ENCODE measurements at regions of chr16 and their contacts with region 1.

Region 1: GRCh38 chr16:4328046-4328503 is 12.2 kb downstream of the GLIS2 start:
- DNase-seq: peak; percentile 96
- H3K4me3 ChIP-seq: peak overlapping the region; percentile 48 to 56 (median 50)
- H3K27ac ChIP-seq: peak overlapping the region; percentile 79 to 90 (median 88)
- H3K4me1 ChIP-seq: peaks cover 62 to 88% (median 83%) of the 10 kb centered on the region in 4 donors
- H3K27me3 ChIP-seq: no peaks in the 10 kb centered on the region
- CTCF ChIP-seq: peak; percentile 55 to 72 (median 64)
- EP300 ChIP-seq: no peak
- POLR2A ChIP-seq: no peak

Region 2: DNA sequence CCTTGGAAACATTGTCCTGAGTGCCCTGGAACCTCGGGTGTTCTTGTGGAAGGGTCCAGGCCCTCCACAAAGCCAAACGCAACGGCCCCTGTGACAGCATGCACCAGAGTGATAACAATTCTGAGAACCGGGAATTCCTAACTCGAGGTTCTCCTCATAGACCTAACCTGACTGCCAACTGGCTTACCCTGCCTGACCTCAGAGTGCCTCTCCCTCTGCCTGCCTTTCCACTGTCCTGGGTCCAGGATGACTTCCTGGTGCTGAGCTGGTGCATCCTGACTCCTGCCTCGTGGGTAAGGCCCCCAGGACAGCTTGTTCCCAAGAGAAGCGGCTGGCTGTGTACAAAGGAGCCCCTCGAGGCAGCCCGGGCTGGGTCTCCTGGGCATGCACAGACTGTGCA is 138.0 kb before region 1 on chr16:
- intact Hi-C with region 1: no loop called
- DNase-seq: no peak
- H3K4me3 ChIP-seq: no peak overlapping the region
- H3K27ac ChIP-seq: no peak overlapping the region
- H3K4me1 ChIP-seq: no peaks in the 10 kb centered on the region
- H3K27me3 ChIP-seq: peaks cover 0 to 8% (median 0%) of the 10 kb centered on the region in 4 donors
- CTCF ChIP-seq: no peak
- EP300 ChIP-seq: no peak
- POLR2A ChIP-seq: no peak

Region 3: DNA sequence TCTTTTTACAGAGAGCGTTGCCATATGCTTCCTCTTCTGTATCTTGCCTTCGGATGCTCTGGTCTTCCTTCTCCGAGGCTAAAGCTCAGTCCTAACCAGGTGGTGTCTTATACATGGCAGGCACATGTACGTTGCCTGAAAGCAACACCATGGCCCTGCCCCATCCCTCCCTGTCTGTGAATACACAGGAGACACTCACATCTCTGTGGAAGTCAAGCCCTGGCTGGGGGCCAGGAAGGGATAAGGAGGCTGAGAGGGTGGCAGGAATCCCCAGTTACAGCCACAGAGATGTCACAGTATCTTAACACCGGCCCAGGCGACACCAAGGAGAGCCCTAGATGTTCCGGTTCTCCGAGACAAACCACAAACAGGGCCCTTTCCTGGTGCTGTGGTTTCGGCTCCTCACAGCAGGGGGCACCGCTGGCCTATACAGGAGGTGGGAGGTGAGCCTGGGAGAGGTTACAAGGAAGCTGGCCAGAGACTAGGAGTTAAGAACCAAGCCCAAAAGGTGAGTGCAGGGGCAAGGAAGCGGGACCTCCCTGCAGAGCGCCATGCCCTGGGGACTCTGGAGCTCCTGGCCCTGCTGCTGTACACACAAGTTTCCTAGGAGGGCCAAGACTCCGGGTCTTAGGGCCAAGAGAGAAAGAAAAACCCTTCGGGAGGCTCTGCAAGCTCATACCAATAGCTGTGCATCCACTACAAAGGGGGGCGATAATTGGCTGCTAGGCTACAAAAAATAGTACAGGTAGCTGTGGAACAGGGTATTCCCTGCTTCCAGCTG is 127.9 kb before region 1 on chr16:
- intact Hi-C with region 1: loop called (anchors 5 kb)
- DNase-seq: peak; percentile 94
- H3K4me3 ChIP-seq: no peak overlapping the region
- H3K27ac ChIP-seq: no peak overlapping the region
- H3K4me1 ChIP-seq: peaks cover 4 to 10% (median 9%) of the 10 kb centered on the region in 4 donors
- H3K27me3 ChIP-seq: no peaks in the 10 kb centered on the region
- CTCF ChIP-seq: peak; percentile 72 to 86 (median 83)
- EP300 ChIP-seq: no peak
- POLR2A ChIP-seq: no peak

Region 4: DNA sequence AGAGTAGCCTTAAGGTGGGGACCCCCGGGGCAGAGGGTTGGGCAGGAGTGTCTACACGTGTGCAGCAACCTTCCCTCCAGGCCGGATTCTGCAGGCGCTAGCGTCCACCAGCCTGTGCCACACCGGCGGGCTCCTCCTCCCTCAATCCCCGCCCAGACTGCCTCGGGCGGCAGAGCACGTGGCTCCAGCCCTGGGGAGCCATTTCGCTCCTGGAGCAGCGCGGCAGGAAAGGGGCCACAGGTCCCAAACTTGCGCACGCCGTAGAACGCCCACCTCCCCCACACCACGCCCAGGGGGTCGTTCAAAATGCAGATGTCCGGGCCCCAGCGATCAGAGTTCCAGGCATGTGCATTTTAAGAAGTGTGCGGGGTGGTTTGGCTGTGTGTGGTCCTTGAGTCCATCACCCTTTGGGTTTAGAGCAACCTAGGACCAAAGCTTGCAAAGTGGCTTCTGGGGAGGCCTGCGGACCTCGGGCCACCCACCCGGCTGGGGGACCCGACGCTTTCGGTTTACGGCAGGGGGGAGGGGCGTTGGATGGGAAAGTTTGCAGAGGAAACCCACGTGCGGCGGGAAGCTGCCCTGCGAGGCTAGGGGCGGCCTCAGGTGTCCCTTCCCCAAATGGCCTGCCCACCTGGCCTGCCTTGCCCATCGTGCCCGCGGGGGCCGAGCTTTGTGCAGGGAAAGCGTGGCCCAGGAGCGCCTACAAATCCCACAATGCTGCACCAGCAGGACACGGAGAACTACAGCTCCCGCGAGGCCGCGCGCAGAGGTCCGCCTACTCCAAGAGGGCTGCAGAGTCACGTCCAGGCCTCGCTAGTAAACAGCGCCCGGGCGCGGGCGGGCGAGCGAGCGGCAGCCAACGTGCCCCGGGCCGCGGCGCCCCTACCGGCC is 56.7 kb before region 1 on chr16:
- intact Hi-C with region 1: loop called (anchors 5 kb)
- DNase-seq: peak; percentile 97
- H3K4me3 ChIP-seq: peak overlapping the region; percentile 88 to 97 (median 92)
- H3K27ac ChIP-seq: peak overlapping the region; percentile 87 to 91 (median 88)
- H3K4me1 ChIP-seq: peaks cover 12 to 32% (median 29%) of the 10 kb centered on the region in 4 donors
- H3K27me3 ChIP-seq: no peaks in the 10 kb centered on the region
- CTCF ChIP-seq: no peak
- EP300 ChIP-seq: no peak
- POLR2A ChIP-seq: peak; percentile 45

Region 5: DNA sequence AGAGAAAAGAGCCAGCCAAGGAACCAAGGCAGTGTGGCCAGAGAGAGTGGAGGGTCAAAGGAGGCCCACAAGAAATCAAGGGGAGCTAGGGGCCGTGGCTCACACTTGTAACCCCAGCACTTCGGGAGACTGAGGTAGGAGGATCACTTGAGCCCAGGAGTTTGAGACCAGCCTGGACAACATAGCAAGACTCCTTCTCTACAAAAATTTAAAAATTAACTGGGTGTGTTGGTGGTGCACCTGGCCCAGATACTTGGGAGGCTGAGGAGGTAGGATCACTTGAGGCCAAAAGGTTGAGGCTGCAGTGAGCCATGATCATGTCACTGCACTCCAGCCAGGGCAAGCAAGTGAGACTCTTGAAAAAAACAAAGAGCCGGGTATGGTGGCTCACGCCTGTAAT is 36.4 kb before region 1 on chr16:
- intact Hi-C with region 1: loop called (anchors 1 kb)
- DNase-seq: no peak
- H3K4me3 ChIP-seq: no peak overlapping the region
- H3K27ac ChIP-seq: peak overlapping the region; percentile 65 to 79 (median 68)
- H3K4me1 ChIP-seq: peaks cover 35 to 61% (median 48%) of the 10 kb centered on the region in 4 donors
- H3K27me3 ChIP-seq: no peaks in the 10 kb centered on the region
- CTCF ChIP-seq: no peak
- EP300 ChIP-seq: no peak
- POLR2A ChIP-seq: no peak